AG04449 (cell line): ENCODE measurements at regions of chrX and their contacts with region 1.

Region 1: DNA sequence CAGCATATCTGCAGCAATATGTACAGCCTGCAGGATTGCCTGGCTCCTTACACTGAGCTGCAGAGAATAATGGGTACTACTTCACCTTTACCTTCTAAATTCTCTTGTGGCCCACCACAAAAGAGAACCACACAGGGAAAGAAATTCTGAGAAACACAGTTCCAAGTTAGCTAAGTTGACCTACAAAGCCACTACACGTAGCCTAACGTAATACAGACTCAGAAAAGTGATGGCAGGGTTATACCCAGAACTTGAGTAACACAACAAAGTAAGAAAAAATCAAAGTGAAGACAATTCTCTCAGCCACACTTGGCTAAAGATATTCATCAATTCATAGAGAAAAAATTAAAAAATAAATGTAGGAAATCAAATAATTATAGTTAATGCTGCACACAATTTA is 26.4 kb upstream of the SRPX start:
- DNase-seq: no peak
- H3K4me3 ChIP-seq: no peak overlapping the region
- CTCF ChIP-seq: no peak

Region 2: GRCh38 chrX:38061335-38061734 is 185.7 kb before region 1 on chrX:
- CTCF ChIA-PET with region 1: no interaction called
- POLR2A ChIA-PET with region 1: no interaction called
- DNase-seq: no peak
- H3K4me3 ChIP-seq: no peak overlapping the region
- CTCF ChIP-seq: no peak

Region 3: GRCh38 chrX:38260231-38260630 is 13.2 kb after region 1 on chrX:
- CTCF ChIA-PET with region 1: interaction called, 10 read pairs
- POLR2A ChIA-PET with region 1: no interaction called
- DNase-seq: no peak
- H3K4me3 ChIP-seq: no peak overlapping the region
- CTCF ChIP-seq: peak; percentile 19

Region 4: GRCh38 chrX:38312436-38312835 is 65.4 kb after region 1 on chrX:
- CTCF ChIA-PET with region 1: no interaction called
- POLR2A ChIA-PET with region 1: no interaction called
- DNase-seq: no peak
- H3K4me3 ChIP-seq: no peak overlapping the region
- CTCF ChIP-seq: no peak